ENCODE measurements at regions of chr2 and their contacts with region 1.

Region 1: GRCh38 chr2:136384531-136385303 is 266.8 kb upstream of the CXCR4 start:
- DNase-seq: peak; percentile 26
- H3K4me3 ChIP-seq: no peak overlapping the region
- H3K27ac ChIP-seq: no peak overlapping the region
- H3K27me3 ChIP-seq: no peaks in the 10 kb centered on the region
- CTCF ChIP-seq: peak; percentile 78

Region 2: DNA sequence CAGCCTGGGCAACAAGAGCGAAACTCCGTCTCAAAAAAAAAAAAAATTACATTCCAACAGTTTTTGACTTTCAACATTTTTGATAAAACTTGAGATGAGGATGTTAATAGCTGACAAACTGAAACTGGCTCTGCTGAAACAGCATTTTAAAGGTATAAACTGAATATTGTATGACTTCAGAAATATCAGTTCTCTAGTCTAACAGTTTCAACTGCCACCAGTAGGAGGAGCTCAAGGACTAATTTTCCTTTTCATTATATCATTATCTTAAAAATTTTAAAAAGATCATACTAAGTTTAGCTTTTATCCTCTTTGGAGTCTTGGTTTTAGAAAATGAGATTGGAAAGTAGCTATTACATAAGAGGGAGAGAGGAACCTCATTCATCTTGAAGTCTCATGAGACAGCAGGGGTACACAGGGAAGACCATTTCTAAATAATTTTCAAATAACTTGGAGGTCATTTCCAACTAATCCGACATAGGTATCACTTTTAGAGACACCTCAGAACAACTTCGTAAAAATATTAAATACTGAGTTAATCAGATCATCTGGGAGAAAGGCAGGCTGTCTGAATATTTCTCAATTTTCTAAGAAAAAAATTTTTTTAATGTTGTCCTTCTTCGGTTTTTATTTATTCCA is 470.9 kb before region 1 on chr2:
- in situ Hi-C with region 1: loop called (anchors 25 kb)
- DNase-seq: peak; percentile 53
- H3K4me3 ChIP-seq: no peak overlapping the region
- H3K27ac ChIP-seq: no peak overlapping the region
- H3K27me3 ChIP-seq: no peaks in the 10 kb centered on the region
- CTCF ChIP-seq: peak; percentile 60